T-cell (primary cell): ENCODE measurements at regions of chr14 and their contacts with region 1.

Region 1: GRCh38 chr14:51979088-51979709 is 10.1 kb upstream of the RTRAF start:
- DNase-seq: peak; percentile 41 to 89 (median 75)
- ATAC-seq: peak; percentile 67 to 86 (median 78)
- H3K4me3 ChIP-seq: no peak overlapping the region
- H3K4me3 Mint-ChIP-seq: no peak overlapping the region
- H3K27ac ChIP-seq: no peak overlapping the region
- H3K27ac Mint-ChIP-seq: no peak overlapping the region
- H3K4me1 ChIP-seq: peaks cover 2 to 6% of the 10 kb centered on the region in 2 experiments
- H3K4me1 Mint-ChIP-seq: peaks cover 5 to 6% (median 6%) of the 10 kb centered on the region in 3 donors
- H3K27me3 ChIP-seq: peaks cover 0 to 2% of the 10 kb centered on the region in 2 experiments
- H3K27me3 Mint-ChIP-seq: no peaks in the 10 kb centered on the region

Region 2: DNA sequence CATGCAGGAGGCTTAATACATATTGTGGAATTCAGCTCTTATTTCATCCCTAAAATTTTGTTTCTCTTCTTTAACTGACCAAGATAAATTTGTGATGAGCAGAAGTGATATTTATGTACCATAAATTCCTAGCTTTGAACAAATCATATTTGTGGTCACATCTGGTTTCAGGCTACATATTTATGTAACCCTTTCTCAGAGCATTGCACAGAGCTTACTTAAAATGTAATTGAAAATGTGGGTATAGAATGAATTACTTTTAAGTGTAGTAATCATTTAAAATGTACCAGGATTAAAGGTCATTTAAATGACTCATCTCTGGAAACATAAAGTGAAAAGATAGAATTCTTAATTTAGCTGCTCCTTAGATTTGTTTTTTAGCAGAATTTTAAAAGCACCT is 457.4 kb before region 1 on chr14:
- CTCF ChIA-PET with region 1: no interaction called
- POLR2A ChIA-PET with region 1: no interaction called
- DNase-seq: no peak
- ATAC-seq: no peak
- H3K4me3 ChIP-seq: no peak overlapping the region
- H3K4me3 Mint-ChIP-seq: no peak overlapping the region
- H3K27ac ChIP-seq: no peak overlapping the region
- H3K27ac Mint-ChIP-seq: no peak overlapping the region
- H3K4me1 ChIP-seq: no peaks in the 10 kb centered on the region
- H3K4me1 Mint-ChIP-seq: no peaks in the 10 kb centered on the region
- H3K27me3 ChIP-seq: peaks cover 0 to 3% of the 10 kb centered on the region in 2 experiments
- H3K27me3 Mint-ChIP-seq: peaks cover 12 to 19% of the 10 kb centered on the region in 2 donors

Region 3: DNA sequence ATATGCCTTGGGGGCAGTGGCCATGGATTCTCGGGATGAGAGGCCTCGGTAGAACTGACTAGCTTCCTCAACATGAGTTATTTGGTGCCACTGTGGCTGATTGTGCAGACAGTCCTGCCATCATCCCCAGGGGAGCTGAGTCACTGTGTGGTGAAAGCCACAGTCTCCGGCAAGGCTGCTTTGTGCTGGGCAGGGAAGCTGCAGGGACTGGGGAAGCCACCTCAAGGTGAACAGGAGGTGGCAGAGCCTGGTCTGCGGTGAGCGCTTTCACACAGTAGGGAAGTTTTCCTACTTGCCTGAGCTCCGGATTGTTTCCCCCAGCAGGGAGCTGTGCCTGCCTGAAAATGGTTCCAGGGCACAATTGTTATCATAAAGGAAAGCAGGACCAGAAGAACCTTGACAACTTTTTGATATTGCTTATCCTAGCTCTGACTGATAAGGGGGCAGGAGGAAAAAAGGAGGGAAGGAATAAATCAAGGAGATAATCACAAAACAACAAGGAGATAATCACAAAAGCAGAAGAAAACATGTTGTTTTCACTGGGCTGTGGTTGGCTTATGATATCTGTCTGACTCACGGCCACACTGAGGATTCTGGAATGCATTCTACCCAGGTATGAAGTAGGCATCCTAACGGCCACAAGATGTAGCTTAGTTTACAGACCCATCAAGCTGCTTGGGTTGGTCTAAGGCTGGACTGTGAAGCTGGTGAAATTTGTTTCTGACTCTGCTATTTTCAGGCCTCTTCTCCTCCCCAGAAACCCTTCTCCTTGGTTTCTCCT is 151.0 kb before region 1 on chr14:
- CTCF ChIA-PET with region 1: interaction called in 1 of 2 experiments, 10 read pairs
- POLR2A ChIA-PET with region 1: no interaction called
- DNase-seq: peak; percentile 15 to 69 (median 42)
- ATAC-seq: peak; percentile 97 to 100 (median 98)
- H3K4me3 ChIP-seq: no peak overlapping the region
- H3K4me3 Mint-ChIP-seq: no peak overlapping the region
- H3K27ac ChIP-seq: no peak overlapping the region
- H3K27ac Mint-ChIP-seq: peak overlapping the region; percentile 4 to 8
- H3K4me1 ChIP-seq: peaks cover 9 to 10% of the 10 kb centered on the region in 2 experiments
- H3K4me1 Mint-ChIP-seq: no peaks in the 10 kb centered on the region
- H3K27me3 ChIP-seq: no peaks in the 10 kb centered on the region
- H3K27me3 Mint-ChIP-seq: peaks cover 0 to 3% of the 10 kb centered on the region in 2 donors

Region 4: DNA sequence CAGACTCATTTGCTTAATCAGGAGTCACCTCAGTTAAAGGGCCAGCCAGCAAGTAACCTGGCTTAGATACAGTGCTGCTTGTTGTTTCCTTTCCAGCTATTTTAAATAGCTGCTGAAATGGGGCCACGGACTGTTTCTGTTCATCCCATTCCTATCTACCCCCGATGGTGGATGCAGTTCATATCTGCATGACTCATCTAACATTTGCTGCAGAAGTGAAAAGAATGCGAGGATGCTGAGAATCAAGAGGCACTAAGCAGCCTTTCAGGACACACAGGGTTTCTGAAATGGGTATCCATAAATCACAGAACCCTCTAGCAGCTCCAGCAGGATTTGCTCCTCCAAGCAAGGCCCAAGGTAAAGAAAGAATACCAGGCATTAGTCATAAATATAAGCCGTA is 50.0 kb before region 1 on chr14:
- CTCF ChIA-PET with region 1: interaction called in 1 of 2 experiments, 14 read pairs
- POLR2A ChIA-PET with region 1: no interaction called
- DNase-seq: no peak
- ATAC-seq: no peak
- H3K4me3 ChIP-seq: no peak overlapping the region
- H3K4me3 Mint-ChIP-seq: no peak overlapping the region
- H3K27ac ChIP-seq: no peak overlapping the region
- H3K27ac Mint-ChIP-seq: no peak overlapping the region
- H3K4me1 ChIP-seq: peaks cover 16 to 35% of the 10 kb centered on the region in 2 experiments
- H3K4me1 Mint-ChIP-seq: peaks cover 76 to 82% (median 77%) of the 10 kb centered on the region in 3 donors
- H3K27me3 ChIP-seq: no peaks in the 10 kb centered on the region
- H3K27me3 Mint-ChIP-seq: no peaks in the 10 kb centered on the region